CD14-positive monocyte (primary cell): ENCODE measurements at regions of chr1 and their contacts with region 1.

Region 1: DNA sequence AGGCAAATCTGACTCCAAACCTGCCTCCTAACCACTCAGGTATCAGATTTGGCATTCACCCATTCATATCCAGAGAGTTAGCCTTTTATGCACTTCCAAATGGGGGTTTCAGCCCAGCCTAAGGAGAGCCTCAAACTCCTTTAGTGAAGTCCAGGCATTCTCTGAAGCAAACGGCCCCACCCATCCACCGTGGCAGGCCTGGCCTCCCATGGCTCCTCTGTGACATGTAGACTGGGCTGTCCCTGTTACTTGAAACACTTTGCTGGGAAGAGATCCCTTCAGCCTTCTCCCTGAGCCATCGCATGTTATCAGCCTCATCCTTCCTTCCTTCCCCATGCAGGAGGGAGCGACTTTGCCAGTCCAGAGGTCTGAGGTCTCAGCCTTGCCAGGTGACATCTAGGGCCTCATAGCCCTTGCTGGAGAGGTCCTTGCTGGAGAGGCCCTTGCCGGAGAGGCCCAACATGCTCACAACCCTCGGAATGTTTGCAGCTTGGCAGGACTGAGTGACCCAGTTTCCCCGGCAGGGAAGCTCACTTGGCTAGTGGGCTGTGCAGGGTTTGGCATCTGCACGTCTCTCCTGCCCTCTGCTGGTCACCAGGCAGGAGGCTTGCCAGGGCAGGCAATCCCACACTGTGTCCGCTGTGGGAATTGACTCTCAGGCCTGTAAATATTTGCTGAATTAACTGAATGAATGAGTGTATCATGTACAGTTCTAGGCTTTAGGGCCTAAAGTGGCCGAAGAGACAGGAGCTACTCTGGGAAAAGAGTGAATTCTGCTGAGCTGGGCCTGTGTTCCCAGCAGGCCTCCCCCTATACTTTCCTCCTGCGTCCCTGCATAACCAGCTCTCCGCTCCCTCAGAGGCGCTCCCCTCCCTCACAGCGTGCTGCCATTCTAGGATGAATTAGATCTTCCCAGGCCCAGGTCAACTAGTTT is 26.7 kb upstream of the RBM15 start:
- DNase-seq: peak; percentile 62 to 75 (median 65)
- H3K4me3 ChIP-seq: no peak overlapping the region
- H3K4me3 Mint-ChIP-seq: no peak overlapping the region
- H3K27ac ChIP-seq: no peak overlapping the region
- H3K27ac Mint-ChIP-seq: no peak overlapping the region
- H3K4me1 ChIP-seq: peaks cover 3 to 9% of the 10 kb centered on the region in 2 donors
- H3K4me1 Mint-ChIP-seq: peaks cover 11% of the 10 kb centered on the region
- H3K27me3 ChIP-seq: no peaks in the 10 kb centered on the region
- H3K27me3 Mint-ChIP-seq: peaks cover 1 to 5% (median 2%) of the 10 kb centered on the region in 3 donors
- CTCF ChIP-seq: peak; percentile 95

Region 2: GRCh38 chr1:110209715-110210603 is 102.5 kb before region 1 on chr1 and contains the start of gene KCNC4:
- intact Hi-C with region 1: loop called (anchors 1 to 2 kb)
- DNase-seq: peak; percentile 80 to 89 (median 82)
- H3K4me3 ChIP-seq: peak within 1 kb of the TSS; percentile 51 to 79 (median 54)
- H3K4me3 Mint-ChIP-seq: peak within 1 kb of the TSS; percentile 89 to 94
- H3K27ac ChIP-seq: peak within 1 kb of the TSS; percentile 74 to 76
- H3K27ac Mint-ChIP-seq: peak within 1 kb of the TSS; percentile 69 to 97 (median 89)
- H3K4me1 ChIP-seq: peaks cover 15 to 34% of the 10 kb centered on the region in 2 donors
- H3K4me1 Mint-ChIP-seq: peaks cover 25% of the 10 kb centered on the region
- H3K27me3 ChIP-seq: peaks cover 12 to 31% of the 10 kb centered on the region in 2 donors
- H3K27me3 Mint-ChIP-seq: peaks cover 26 to 36% (median 27%) of the 10 kb centered on the region in 3 donors
- CTCF ChIP-seq: no peak
- polyA plus RNA-seq, gene KCNC4: 0.03 to 0.56 (median 0.12) TPM

Region 3: DNA sequence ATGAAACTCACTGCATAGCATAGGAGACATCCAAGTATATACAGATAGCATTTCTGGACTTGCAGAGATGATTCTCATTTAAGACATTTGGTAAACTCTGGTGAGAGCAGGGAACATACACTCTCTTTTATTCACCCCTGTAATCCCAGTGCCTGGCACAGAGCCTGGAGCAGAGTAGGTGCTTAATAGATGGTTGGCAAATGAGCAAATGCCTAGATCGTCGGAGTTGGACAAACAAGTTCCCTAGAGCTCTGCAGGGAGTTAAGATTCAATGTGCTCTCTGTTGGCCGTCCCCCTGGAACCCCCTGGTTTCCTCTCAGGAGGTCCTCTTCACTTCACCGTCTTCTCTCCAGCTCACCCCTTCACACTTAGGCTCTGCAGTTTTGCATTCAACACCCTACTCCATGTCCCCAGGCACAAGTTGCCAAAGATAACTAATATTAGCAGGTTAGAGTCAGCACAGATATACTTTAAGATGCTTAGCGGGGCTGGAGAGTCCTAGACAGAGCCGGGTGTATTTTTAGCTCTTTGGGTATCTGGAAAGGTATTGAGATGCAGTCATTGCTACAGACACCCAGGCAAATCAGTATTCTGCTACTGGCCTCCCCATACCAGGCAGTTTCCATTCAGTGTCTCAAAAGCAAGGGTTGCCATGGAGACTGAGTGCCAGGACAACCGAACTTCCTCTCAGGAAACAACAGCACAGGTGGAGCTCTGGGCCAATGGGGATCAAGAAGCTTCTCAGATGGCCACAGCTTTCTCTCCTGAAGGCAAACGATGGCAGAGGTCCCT is 57.3 kb before region 1 on chr1:
- intact Hi-C with region 1: no loop called
- DNase-seq: peak in 1 of 3 donors; percentile 22
- H3K4me3 ChIP-seq: no peak overlapping the region
- H3K4me3 Mint-ChIP-seq: no peak overlapping the region
- H3K27ac ChIP-seq: no peak overlapping the region
- H3K27ac Mint-ChIP-seq: no peak overlapping the region
- H3K4me1 ChIP-seq: peaks cover 12 to 13% of the 10 kb centered on the region in 2 donors
- H3K4me1 Mint-ChIP-seq: peaks cover 14% of the 10 kb centered on the region
- H3K27me3 ChIP-seq: no peaks in the 10 kb centered on the region
- H3K27me3 Mint-ChIP-seq: peaks cover 1 to 9% (median 5%) of the 10 kb centered on the region in 3 donors
- CTCF ChIP-seq: no peak